Activated CD4-positive, alpha-beta T cell treated with anti-CD3 and anti-CD28 coated beads for 36 hours (primary cell): ENCODE measurements at regions of chr17 and their contacts with region 1.

Region 1: GRCh38 chr17:16438557-16439302 is 23.4 kb downstream of the TRPV2 start:
- DNase-seq: peak; percentile 97
- ATAC-seq: peak; percentile 91
- H3K4me3 Mint-ChIP-seq: peak overlapping the region; percentile 99
- H3K27ac Mint-ChIP-seq: peak overlapping the region; percentile 99
- H3K4me1 Mint-ChIP-seq: peaks cover 40% of the 10 kb centered on the region
- H3K27me3 Mint-ChIP-seq: no peaks in the 10 kb centered on the region

Region 2: GRCh38 chr17:16215273-16215964 is 223.3 kb before region 1 on chr17 and contains the start of gene NCOR1:
- CTCF ChIA-PET with region 1: no interaction called
- POLR2A ChIA-PET with region 1: no interaction called
- intact Hi-C with region 1: loop called in 1 of 2 experiments (anchors 2 kb)
- DNase-seq: peak; percentile 96
- ATAC-seq: peak; percentile 87
- H3K4me3 Mint-ChIP-seq: peak within 1 kb of the TSS; percentile 93
- H3K27ac Mint-ChIP-seq: peak within 1 kb of the TSS; percentile 81
- H3K4me1 Mint-ChIP-seq: peaks cover 42% of the 10 kb centered on the region
- H3K27me3 Mint-ChIP-seq: no peaks in the 10 kb centered on the region
- total RNA-seq, gene NCOR1: 110 to 155 TPM

Region 3: GRCh38 chr17:16353317-16354174 is 85.2 kb before region 1 on chr17 and contains the start of gene CENPV:
- CTCF ChIA-PET with region 1: interaction called, 3 read pairs
- POLR2A ChIA-PET with region 1: interaction called, 9 read pairs
- intact Hi-C with region 1: loop called in 1 of 2 experiments (anchors 1 kb)
- DNase-seq: peak; percentile 81
- ATAC-seq: peak; percentile 82
- H3K4me3 Mint-ChIP-seq: peak within 1 kb of the TSS; percentile 97
- H3K27ac Mint-ChIP-seq: peak within 1 kb of the TSS; percentile 84
- H3K4me1 Mint-ChIP-seq: peaks cover 22% of the 10 kb centered on the region
- H3K27me3 Mint-ChIP-seq: no peaks in the 10 kb centered on the region
- total RNA-seq, gene CENPV: 100 to 132 TPM

Region 4: DNA sequence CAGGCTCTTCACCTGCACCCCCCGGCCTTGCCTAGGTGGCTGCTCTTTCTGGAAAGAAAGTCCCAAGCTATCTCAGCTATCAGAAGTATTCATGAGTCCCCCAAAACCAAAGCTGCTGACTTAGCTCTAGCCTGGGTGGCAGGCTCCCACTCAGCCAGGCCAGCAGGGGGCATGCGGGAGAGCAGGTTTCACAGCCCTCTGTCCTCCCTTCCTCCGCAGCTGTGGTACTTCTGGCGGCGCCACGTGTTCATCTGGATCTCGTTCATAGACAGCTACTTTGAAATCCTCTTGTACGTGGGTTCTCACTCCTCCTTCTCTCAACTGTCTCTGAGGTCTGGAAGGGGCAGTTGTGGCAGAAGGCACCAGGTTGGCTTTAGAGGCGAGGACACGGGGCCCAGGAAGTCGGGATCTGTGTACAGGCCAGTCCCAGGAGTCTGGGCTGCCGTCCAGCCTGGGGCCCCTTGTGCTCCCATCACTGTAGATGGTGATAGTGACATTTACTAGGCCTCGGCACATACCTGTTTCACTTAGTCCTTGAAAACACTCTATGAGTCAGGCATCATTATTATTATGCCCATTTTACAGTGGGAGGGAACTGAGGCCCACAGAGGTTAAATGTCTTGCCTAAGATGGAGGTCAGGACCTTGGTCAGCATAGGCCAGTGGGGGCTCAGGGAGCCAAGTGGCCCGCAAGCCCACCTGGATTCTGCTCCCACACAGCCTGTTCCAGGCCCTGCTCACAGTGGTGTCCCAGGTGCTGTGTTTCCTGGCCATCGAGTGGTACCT is 10.4 kb before region 1 on chr17:
- CTCF ChIA-PET with region 1: interaction called, 5 read pairs
- POLR2A ChIA-PET with region 1: interaction called, 10 read pairs
- intact Hi-C with region 1: no loop called
- DNase-seq: peak; percentile 77
- ATAC-seq: peak; percentile 93
- H3K4me3 Mint-ChIP-seq: no peak overlapping the region
- H3K27ac Mint-ChIP-seq: no peak overlapping the region
- H3K4me1 Mint-ChIP-seq: peaks cover 2% of the 10 kb centered on the region
- H3K27me3 Mint-ChIP-seq: no peaks in the 10 kb centered on the region

Region 5: DNA sequence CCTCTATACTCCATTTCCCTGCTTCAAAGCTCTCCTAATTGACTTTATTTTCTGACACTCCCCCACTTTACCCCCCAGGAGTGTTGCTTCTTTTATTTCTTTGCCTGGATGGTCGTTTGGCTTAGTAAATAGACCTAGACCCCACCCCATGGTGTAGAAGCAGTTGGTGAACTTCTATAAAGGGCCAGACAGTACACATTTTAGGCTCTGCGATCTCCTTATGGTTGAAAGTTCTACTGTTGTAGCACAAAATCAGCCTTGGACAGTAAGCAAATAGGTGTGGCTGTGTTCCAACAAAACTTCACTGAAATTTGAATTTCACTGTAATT is 98.4 kb after region 1 on chr17:
- CTCF ChIA-PET with region 1: interaction called, 4 read pairs
- POLR2A ChIA-PET with region 1: no interaction called
- intact Hi-C with region 1: loop called in 1 of 2 experiments (anchors 1 kb)
- DNase-seq: no peak
- ATAC-seq: no peak
- H3K4me3 Mint-ChIP-seq: peak overlapping the region; percentile 92
- H3K27ac Mint-ChIP-seq: no peak overlapping the region
- H3K4me1 Mint-ChIP-seq: peaks cover 9% of the 10 kb centered on the region
- H3K27me3 Mint-ChIP-seq: no peaks in the 10 kb centered on the region

Region 6: DNA sequence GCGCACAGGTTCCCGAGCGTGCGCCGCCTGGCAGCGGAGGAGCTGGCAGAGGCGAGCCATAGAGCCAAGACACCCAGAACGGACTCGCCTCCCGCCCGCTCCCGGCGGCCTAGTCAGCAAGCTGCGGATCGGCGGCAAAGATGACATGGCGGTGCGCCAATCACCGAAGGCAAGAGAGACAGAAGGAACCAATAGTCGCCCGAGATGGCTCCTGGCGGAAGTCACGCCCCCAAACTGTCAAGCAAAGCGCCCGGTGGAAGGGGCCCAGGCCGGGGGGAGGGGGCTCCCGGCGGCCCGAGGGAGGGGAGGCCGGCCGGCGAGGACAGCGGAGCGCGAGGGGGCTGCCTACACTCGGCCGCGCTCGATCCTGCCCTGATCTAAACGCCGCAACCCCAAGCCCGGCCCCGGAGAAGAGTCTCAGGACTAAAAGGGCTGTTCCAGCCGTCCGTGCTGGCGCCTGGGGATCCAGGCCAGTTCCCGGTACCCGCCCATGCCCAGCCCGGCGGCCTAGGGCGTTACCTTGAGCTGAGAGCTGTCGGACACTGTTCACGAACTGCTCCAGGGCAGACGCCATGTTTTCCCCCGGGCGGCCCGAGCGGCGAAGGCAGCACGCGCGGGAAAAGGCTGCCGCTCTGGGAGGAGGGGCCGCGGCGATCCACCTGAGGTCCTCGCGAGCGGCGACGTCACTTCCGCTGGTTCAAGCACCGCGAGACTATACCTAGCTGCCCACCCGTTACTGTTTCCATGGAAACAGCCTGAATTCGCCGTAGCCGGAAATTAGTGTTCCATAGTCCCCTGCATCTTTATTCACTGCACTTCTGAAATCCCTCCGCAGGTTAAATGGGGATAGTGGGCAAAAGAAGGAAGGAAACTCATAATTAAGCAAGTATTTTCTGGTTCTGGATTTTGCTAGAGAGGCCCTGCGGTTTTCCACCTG is 842.2 kb after region 1 on chr17 and contains the start of gene COPS3:
- CTCF ChIA-PET with region 1: no interaction called
- POLR2A ChIA-PET with region 1: no interaction called
- intact Hi-C with region 1: loop called in 1 of 2 experiments (anchors 2 kb)
- DNase-seq: peak; percentile 99
- ATAC-seq: peak; percentile 94
- H3K4me3 Mint-ChIP-seq: peak within 1 kb of the TSS; percentile 92
- H3K27ac Mint-ChIP-seq: peak within 1 kb of the TSS; percentile 95
- H3K4me1 Mint-ChIP-seq: peaks cover 41% of the 10 kb centered on the region
- H3K27me3 Mint-ChIP-seq: no peaks in the 10 kb centered on the region
- total RNA-seq, gene COPS3: 79.6 to 83.1 TPM